ENCODE measurements at regions of chr18 and their contacts with region 1.

Region 1: GRCh38 chr18:34867520-34867919 is 157.4 kb downstream of the DTNA start:
- DNase-seq: peak; percentile 24
- H3K4me3 Mint-ChIP-seq: no peak overlapping the region
- H3K27ac Mint-ChIP-seq: no peak overlapping the region
- H3K4me1 Mint-ChIP-seq: peaks cover 35% of the 10 kb centered on the region
- H3K27me3 Mint-ChIP-seq: peaks cover 12% of the 10 kb centered on the region

Region 2: DNA sequence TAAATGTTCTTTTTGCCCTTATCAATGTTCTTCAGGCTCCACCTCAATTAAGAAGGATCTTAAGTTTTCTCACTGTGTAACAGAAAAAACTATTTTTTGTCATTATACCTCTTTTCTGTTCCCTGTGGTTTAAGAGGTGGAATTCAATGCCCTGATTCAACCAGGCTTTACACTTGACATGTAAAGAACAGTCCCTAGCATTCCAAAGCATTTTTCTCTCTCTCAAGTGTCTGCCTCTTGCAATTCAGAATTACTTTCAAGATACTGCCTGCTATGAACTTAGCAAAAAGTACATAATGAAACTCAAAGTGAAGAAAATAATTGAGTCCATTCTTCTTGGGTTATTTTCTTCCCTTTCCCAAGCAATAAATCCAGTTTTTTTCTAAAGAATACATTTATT is 482.2 kb before region 1 on chr18:
- CTCF ChIA-PET with region 1: no interaction called
- POLR2A ChIA-PET with region 1: no interaction called
- intact Hi-C with region 1: no loop called
- DNase-seq: no peak
- H3K4me3 Mint-ChIP-seq: no peak overlapping the region
- H3K27ac Mint-ChIP-seq: no peak overlapping the region
- H3K4me1 Mint-ChIP-seq: no peaks in the 10 kb centered on the region
- H3K27me3 Mint-ChIP-seq: no peaks in the 10 kb centered on the region

Region 3: DNA sequence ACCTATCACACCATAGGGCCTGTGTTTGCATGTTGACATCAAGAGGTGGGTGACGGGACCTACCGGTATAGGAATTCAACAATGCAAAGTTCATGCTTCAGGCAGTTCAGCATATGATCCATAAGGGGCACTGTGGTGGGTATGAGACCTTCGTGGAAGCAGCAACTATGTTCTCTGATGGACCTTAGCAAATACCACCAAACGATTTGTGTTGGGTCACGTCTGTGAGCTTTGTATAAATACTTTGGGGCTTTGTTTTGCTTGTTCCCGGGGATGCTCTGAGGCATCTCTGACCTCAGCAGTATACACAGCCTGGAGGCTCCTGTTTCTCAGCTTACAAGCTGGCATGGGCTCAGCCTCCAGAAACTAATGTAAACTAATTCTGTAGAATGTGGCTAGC is 45.8 kb before region 1 on chr18:
- CTCF ChIA-PET with region 1: no interaction called
- POLR2A ChIA-PET with region 1: no interaction called
- intact Hi-C with region 1: no loop called
- DNase-seq: no peak
- H3K4me3 Mint-ChIP-seq: no peak overlapping the region
- H3K27ac Mint-ChIP-seq: no peak overlapping the region
- H3K4me1 Mint-ChIP-seq: no peaks in the 10 kb centered on the region
- H3K27me3 Mint-ChIP-seq: peaks cover 18% of the 10 kb centered on the region

Region 4: DNA sequence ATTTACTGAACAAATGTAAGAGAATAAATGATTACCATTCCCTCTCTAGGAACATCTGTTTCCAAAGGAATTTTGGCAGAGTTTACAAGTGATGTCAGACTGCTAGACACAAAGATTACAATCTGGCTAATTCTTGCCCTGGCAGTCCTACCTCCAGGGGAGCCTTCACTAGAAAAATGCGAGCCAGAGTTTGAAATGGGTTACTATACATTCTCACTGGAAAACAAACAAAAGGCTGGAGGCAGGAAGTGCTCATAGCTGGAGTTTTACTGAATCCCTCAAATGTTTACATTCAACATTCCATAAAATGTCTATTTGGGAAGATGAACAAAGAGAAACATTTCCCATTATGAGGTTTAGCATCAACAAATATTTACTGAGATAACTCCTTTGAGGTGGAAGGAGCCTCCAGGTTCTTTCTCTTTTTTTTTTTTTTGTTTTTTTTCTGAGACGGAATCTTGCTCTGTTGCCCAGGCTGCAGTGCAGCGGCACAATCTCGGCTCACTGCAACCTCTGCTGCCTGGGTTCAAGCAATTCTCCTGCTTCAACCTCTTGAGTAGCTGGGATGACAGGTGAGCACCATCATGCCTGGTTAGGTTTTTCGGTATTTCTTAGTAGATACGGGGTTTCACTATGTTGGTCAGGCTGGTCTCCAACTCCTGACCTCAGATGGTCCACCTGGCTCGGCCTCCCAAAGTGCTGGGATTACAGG is 44.6 kb after region 1 on chr18:
- CTCF ChIA-PET with region 1: interaction called, 6 read pairs
- POLR2A ChIA-PET with region 1: no interaction called
- intact Hi-C with region 1: loop called (anchors 2 kb)
- DNase-seq: no peak
- H3K4me3 Mint-ChIP-seq: no peak overlapping the region
- H3K27ac Mint-ChIP-seq: no peak overlapping the region
- H3K4me1 Mint-ChIP-seq: peaks cover 3% of the 10 kb centered on the region
- H3K27me3 Mint-ChIP-seq: peaks cover 10% of the 10 kb centered on the region

Region 5: GRCh38 chr18:35143622-35144596 is 276.4 kb after region 1 on chr18:
- CTCF ChIA-PET with region 1: no interaction called
- POLR2A ChIA-PET with region 1: no interaction called
- intact Hi-C with region 1: loop called (anchors 5 kb)
- DNase-seq: peak; percentile 38
- H3K4me3 Mint-ChIP-seq: no peak overlapping the region
- H3K27ac Mint-ChIP-seq: no peak overlapping the region
- H3K4me1 Mint-ChIP-seq: no peaks in the 10 kb centered on the region
- H3K27me3 Mint-ChIP-seq: no peaks in the 10 kb centered on the region

Measured in activated CD4-positive, alpha-beta memory T cell treated with anti-CD3 and anti-CD28 coated beads for 36 hours (primary cell).